Panc1 (cell line): ENCODE measurements at regions of chrX and their contacts with region 1.

Region 1: DNA sequence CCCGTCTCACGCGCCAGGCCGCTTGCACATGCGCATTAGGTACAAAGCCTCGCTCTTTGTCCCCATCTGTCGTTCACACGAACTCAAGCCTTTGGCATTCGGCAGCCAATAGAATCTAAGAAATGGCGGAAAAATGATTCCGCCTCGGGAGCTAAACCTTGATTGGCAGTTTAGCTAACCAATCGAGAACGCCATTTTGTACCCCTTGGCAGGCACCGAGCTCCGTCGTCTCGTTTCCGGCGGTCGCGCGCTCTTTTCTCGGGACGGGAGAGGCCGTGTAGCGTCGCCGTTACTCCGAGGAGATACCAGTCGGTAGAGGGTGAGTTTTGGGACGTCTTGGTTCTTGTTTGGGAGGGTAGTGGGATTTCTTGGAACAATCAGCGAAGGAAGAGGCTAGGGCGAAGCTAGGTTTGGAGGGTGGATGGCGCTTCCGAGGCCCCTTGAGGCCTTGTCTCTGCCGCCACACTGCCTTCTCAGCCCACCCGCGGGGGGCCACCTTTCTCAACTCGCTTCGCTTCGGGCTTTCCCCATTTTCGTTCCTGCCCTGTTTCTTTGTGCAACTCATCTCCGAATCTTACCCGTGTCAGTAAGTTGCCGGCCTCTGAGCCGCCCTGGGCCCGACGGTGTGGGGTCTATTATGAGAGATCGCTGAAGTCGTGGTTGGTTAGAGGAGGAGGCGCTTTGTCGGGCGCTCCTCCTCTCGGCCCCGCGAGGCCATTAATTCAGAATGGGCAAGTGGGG is at the start of gene NONO:
- DNase-seq: peak; percentile 93
- ATAC-seq: peak; percentile 95
- H3K4me3 ChIP-seq: peak within 1 kb of the TSS; percentile 89 to 91
- H3K27ac ChIP-seq: peak within 1 kb of the TSS; percentile 95
- H3K4me1 ChIP-seq: peaks cover 12% of the 10 kb centered on the region
- H3K27me3 ChIP-seq: no peaks in the 10 kb centered on the region
- CTCF ChIP-seq: no peak; the same call in 1 of the 2 replicates
- total RNA-seq, gene NONO: 527 TPM

Region 2: GRCh38 chrX:71251466-71251973 is 32.1 kb before region 1 on chrX:
- CTCF ChIA-PET with region 1: interaction called, 10 read pairs
- POLR2A ChIA-PET with region 1: interaction called, 3 read pairs
- in situ Hi-C with region 1: no loop called
- intact Hi-C with region 1: no loop called
- DNase-seq: no peak
- ATAC-seq: no peak
- H3K4me3 ChIP-seq: no peak overlapping the region
- H3K27ac ChIP-seq: no peak overlapping the region
- H3K4me1 ChIP-seq: peaks cover 16% of the 10 kb centered on the region
- H3K27me3 ChIP-seq: no peaks in the 10 kb centered on the region
- CTCF ChIP-seq: no peak

Region 3: GRCh38 chrX:71365876-71366673 is 82.5 kb after region 1 on chrX and contains the start of gene TAF1:
- CTCF ChIA-PET with region 1: no interaction called
- POLR2A ChIA-PET with region 1: interaction called, 10 read pairs
- in situ Hi-C with region 1: no loop called
- intact Hi-C with region 1: no loop called
- DNase-seq: peak; percentile 95
- ATAC-seq: peak; percentile 94
- H3K4me3 ChIP-seq: peak within 1 kb of the TSS; percentile 87 to 96
- H3K27ac ChIP-seq: peak within 1 kb of the TSS; percentile 95
- H3K4me1 ChIP-seq: peaks cover 4% of the 10 kb centered on the region
- H3K27me3 ChIP-seq: no peaks in the 10 kb centered on the region
- CTCF ChIP-seq: no peak
- total RNA-seq, gene TAF1: 38.3 TPM

Region 4: GRCh38 chrX:71809886-71810285 is 526.3 kb after region 1 on chrX:
- CTCF ChIA-PET with region 1: no interaction called
- POLR2A ChIA-PET with region 1: interaction called, 11 read pairs
- in situ Hi-C with region 1: no loop called
- intact Hi-C with region 1: no loop called
- DNase-seq: no peak
- ATAC-seq: peak; percentile 89
- H3K4me3 ChIP-seq: peak overlapping the region in 1 of 2 experiments; percentile 30; a peak in 2 of 4 replicates
- H3K27ac ChIP-seq: no peak overlapping the region
- H3K4me1 ChIP-seq: no peaks in the 10 kb centered on the region
- H3K27me3 ChIP-seq: no peaks in the 10 kb centered on the region
- CTCF ChIP-seq: no peak